AG04450 (cell line): ENCODE measurements at regions of chr4 and their contacts with region 1.

Region 1: DNA sequence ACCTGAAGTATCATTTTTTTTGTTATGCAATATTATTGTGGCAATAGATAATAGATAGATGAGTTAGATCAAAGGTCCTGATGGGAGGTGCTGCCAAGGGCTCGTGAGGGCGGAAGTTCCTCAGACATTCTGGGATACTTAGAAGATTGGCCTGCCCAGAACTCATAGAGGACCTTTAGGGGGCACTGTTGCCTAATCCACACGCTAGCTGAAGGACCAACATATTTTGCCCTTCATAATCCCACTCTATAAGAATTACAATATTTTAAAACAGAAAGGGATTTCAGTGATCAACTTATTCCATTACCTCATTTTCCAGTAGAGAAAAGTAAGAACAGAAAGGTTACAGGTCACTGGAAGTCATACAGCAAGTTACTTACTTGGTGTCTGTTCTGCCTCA is 22.9 kb upstream of the COX7B2 start:
- DNase-seq: no peak
- H3K4me3 ChIP-seq: no peak overlapping the region
- H3K27ac ChIP-seq: no peak overlapping the region
- H3K27me3 ChIP-seq: no peaks in the 10 kb centered on the region
- CTCF ChIP-seq: peak; percentile 86

Region 2: DNA sequence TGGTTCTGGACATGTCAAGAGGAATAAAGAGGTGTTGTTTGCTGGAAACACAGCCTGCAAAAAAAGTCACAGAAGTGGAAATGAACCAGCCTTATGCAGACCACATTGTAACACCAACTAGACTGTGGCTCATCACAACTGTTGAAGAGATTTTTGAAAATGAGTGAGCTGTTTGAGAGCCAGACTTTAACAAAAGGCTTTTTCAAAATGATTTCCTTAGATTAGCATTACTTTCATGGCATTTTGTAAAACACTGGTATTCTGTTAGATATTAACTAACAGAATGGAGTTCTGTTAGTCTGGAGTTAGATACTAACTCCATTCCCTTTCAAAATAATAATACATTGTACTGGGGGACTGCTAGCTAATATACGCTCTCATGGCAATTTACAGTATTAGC is 481.4 kb before region 1 on chr4:
- CTCF ChIA-PET with region 1: no interaction called
- POLR2A ChIA-PET with region 1: no interaction called
- DNase-seq: no peak
- H3K4me3 ChIP-seq: no peak overlapping the region
- H3K27ac ChIP-seq: no peak overlapping the region
- H3K27me3 ChIP-seq: no peaks in the 10 kb centered on the region
- CTCF ChIP-seq: no peak

Region 3: DNA sequence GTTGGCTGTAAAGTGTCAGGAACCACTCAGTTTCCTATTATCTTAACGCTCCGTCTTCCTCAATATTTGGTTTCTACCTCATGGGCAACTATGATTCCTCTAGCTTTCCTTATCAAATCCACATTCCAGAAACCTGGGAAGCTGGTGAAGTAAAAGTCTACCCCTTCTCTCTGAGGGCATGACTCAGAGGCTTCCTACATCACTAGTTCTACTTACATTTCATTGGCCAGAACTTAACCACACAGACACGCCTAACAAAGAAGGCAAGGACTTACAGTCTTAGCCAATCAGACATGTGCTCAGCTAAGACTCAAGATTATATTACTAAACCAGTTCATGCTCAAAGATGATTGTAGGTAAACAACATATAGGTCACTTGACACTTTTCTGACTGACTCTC is 53.3 kb before region 1 on chr4:
- CTCF ChIA-PET with region 1: no interaction called
- POLR2A ChIA-PET with region 1: no interaction called
- DNase-seq: no peak
- H3K4me3 ChIP-seq: no peak overlapping the region
- H3K27ac ChIP-seq: no peak overlapping the region
- H3K27me3 ChIP-seq: no peaks in the 10 kb centered on the region
- CTCF ChIP-seq: no peak

Region 4: DNA sequence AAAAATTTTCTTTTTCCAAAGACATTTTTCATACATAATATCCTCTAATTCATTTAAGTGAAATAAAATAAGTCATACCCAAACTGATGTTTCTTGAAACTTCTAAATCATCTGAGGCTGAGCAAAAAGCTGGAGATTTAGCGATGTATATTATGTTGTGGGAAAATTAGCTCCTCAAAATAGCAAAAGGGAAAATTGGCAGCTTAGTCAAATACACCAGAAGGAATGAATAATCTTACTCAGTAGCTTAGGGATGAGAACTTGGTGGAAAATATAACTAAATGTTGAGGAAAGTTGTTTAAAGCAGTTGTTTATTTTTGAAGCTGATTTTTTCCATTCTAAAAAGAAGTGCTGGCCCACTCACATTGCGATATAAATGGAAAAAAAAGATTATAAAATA is 20.5 kb after region 1 on chr4:
- CTCF ChIA-PET with region 1: interaction called, 21 read pairs
- POLR2A ChIA-PET with region 1: no interaction called
- DNase-seq: no peak
- H3K4me3 ChIP-seq: no peak overlapping the region
- H3K27ac ChIP-seq: no peak overlapping the region
- H3K27me3 ChIP-seq: no peaks in the 10 kb centered on the region
- CTCF ChIP-seq: no peak

Region 5: DNA sequence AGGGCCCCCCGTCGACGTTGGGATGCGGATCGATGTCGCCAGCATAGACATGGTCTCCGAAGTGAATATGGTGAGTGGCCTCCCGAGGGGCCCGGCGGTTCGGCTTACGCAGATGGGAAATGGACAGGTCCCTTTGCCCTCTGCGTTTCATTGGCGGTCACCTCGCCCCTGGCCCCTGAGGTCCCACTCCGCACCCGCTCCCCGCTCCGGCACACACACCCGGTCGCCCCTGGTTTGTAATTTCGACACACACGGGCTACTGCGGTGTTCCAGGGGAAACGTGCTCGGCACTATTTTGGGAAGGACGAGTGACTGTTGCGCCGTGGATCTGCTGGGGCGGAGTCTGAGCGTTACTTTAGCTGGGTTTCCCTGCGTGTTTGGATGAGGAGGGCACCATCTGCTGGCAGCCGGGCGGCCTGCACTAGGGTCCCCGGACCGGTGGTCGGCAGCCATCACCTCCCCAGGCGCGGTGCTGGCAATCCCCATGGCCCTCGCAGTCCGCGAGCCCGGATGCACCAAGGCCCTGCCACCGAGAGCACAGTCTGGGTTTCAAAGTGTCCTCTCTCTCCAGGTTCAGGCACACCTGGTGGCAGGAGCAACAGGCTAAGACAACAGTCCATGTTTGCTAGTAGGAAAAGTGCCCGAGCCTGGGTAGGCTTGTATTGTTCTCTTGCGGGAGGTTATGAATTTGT is 100.6 kb after region 1 on chr4:
- CTCF ChIA-PET with region 1: interaction called, 34 read pairs
- POLR2A ChIA-PET with region 1: no interaction called
- DNase-seq: peak; percentile 20
- H3K4me3 ChIP-seq: peak overlapping the region; percentile 68
- H3K27ac ChIP-seq: no peak overlapping the region
- H3K27me3 ChIP-seq: no peaks in the 10 kb centered on the region
- CTCF ChIP-seq: peak; percentile 84

Region 6: DNA sequence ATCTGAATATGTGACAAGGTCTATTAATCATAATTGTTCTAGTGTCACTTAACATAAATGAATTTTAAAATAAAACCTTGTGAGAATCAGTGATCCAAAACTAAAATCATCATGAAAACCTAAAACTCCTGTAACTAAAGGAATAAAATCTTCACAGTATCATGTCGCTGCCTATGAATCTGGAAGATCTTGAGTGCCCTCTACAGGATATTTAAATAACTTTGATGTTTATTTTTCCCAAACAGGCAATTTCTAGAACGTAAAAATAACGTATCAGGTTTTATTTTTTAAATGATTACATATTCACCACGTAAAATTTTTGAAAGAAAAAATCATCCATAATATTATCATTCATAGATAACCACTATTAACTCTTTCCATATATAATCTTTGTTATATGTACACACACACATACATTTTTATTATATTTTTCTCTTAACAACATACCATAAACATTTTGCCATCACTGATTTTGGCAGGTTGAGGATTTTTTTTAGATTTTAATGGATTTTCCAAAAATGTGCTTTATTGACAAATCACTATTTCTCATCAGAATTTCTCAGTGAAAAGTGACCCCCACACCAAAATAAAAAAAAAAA is 451.9 kb after region 1 on chr4:
- CTCF ChIA-PET with region 1: interaction called, 39 read pairs
- POLR2A ChIA-PET with region 1: no interaction called
- DNase-seq: peak; percentile 21
- H3K4me3 ChIP-seq: no peak overlapping the region
- H3K27ac ChIP-seq: no peak overlapping the region
- H3K27me3 ChIP-seq: no peaks in the 10 kb centered on the region
- CTCF ChIP-seq: peak; percentile 56